ENCODE measurements at regions of chr1 and their contacts with region 1.

Region 1: GRCh38 chr1:171188388-171189266 is 3.5 kb downstream of the FMO2 start:
- DNase-seq: peak; percentile 48 to 76 (median 51)
- ATAC-seq: peak; percentile 60 to 87
- H3K4me3 ChIP-seq: peak overlapping the region; percentile 96
- H3K27ac ChIP-seq: peak overlapping the region; percentile 52
- H3K4me1 ChIP-seq: peaks cover 4% of the 10 kb centered on the region
- H3K27me3 ChIP-seq: no peaks in the 10 kb centered on the region

Region 2: DNA sequence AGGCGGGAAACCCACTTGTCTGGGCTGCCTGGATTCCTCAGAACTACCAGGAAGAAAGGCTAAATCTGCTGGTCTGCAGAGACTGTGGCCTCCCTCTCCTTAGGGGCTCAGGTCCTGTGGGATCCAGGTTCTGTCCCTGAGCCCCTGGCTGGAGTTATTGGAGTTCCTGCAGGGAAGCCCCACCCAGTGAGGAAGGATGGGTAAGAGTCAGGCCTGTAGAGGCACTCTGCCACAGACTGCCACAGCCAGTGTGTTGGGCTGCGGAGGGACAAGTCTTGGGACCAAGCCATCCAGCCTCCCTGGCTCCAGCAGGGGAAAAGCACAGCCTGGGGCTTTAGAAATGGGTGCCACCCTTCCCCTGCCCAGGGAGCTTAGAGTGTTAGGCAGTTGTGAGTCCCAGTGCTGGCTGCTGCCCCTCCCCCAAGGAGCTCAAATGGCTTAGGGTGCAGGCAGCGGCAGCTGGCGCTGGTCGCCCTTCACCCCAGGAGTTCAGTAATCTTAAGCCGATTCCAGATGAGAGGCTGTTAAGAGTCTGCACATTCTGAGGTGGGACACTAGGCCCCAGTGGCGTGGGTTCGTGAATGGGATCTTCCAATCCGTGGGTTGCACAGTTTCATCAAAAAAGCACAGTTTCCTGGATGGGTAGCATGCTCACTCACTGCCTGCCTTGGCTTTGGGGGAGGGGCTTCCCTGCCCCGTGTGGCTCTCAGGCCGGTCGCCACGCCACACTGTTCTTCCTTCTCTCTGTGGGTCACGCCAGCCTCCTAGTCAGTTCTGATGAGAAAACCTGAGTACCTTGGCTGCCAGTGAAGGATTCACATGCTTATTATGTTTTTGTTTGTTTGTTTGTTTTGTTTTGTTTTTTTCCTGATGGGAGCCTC is 155.6 kb before region 1 on chr1:
- intact Hi-C with region 1: no loop called
- DNase-seq: no peak
- ATAC-seq: no peak
- H3K4me3 ChIP-seq: no peak overlapping the region
- H3K27ac ChIP-seq: no peak overlapping the region
- H3K4me1 ChIP-seq: no peaks in the 10 kb centered on the region
- H3K27me3 ChIP-seq: no peaks in the 10 kb centered on the region

Region 3: DNA sequence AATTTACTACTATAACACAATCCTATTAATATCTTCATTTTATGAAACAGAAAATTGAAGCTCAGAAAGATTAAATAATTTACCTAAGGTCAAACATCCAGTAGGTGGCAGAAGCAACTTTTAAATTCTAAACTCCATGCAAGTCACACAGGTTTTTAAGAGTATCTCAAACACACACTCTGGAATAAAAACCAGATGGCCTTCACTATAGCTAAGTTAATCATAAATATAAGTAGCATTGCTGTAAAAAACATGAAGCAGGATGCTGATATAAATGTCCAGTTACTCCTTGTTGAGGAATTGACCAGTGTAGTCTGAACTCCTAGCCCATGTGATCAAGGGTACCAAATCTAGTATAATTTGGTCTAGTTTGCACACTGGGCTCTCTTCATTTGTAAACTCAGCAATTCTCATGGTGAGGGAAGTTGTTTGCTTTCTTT is 107.3 kb before region 1 on chr1:
- intact Hi-C with region 1: loop called in 3 of 4 experiments (anchors 5 to 10 kb)
- DNase-seq: no peak
- ATAC-seq: peak; percentile 42 to 66
- H3K4me3 ChIP-seq: no peak overlapping the region
- H3K27ac ChIP-seq: peak overlapping the region; percentile 61
- H3K4me1 ChIP-seq: peaks cover 4% of the 10 kb centered on the region
- H3K27me3 ChIP-seq: no peaks in the 10 kb centered on the region

Region 4: DNA sequence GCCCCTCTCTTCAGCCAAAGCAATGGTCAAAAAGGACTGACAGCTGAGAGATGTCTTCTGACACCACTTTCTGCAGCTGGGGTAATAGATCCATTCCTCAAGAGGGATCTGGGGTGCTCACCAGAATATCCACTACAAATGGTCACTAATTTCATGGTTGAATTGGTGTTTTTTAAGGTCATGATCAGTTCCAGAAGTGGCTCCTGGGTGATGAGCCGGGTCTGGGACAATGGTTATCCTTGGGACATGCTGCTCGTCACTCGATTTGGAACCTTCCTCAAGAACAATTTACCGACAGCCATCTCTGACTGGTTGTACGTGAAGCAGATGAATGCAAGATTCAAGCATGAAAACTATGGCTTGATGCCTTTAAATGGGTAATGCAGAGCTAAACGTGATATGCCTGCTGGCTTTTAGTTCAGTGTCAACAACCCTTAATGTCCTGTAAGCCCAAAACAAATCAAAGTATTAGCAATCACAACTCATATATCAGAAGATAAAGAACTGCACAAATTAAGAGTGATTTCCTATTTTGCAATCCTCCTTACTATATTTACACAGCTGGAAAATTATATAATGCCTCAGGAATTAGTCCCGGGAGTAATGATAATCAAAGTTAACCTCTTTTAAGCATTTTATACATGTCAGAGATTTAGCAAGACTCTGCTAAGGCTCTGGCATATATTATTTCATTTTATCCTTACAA is 77.9 kb before region 1 on chr1:
- intact Hi-C with region 1: loop called in 1 of 4 experiments (anchors 2 kb)
- DNase-seq: peak in 1 of 3 donors; percentile 17
- ATAC-seq: peak; percentile 17 to 29
- H3K4me3 ChIP-seq: no peak overlapping the region
- H3K27ac ChIP-seq: peak overlapping the region; percentile 38
- H3K4me1 ChIP-seq: peaks cover 4% of the 10 kb centered on the region
- H3K27me3 ChIP-seq: no peaks in the 10 kb centered on the region

Region 5: DNA sequence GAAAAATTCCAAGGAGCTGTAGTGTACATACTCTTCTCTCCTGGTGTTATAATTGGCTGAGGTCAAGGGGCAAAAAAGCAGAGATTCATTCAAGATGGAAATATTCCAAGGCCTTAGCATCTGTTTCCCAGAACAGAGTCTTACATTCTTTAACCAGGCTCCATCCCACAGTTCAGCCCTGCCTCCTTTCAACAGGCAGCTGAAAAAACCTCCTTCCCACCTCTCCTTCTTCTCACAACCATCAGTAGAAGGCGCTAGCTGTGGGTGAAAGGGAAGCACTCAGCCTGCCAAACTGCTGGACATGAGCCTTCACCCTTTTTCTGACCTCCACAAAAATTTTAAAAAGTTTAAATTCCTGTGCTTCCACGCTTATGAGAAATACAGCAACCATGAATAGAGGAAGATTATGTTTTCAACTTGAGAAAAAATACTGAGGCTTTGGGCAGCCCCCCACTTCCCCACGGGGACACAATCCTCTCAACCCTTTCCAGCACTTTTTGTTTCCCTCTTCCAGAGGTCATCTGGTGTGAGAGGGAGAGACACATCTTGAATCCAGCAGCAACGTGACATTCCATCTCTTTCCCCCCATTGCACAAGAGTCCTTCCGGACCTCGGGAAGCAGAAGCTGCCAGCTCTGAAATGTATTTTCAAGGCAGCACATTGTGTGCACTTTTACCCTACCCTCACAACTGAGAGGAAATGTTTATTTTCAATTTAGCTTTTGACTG is 46.8 kb before region 1 on chr1:
- intact Hi-C with region 1: loop called in 1 of 4 experiments (anchors 2 kb)
- DNase-seq: peak; percentile 68 to 80 (median 73)
- ATAC-seq: peak; percentile 88 to 89
- H3K4me3 ChIP-seq: no peak overlapping the region
- H3K27ac ChIP-seq: peak overlapping the region; percentile 88
- H3K4me1 ChIP-seq: peaks cover 7% of the 10 kb centered on the region
- H3K27me3 ChIP-seq: no peaks in the 10 kb centered on the region

Region 6: GRCh38 chr1:171550050-171550449 is 361.4 kb after region 1 on chr1:
- intact Hi-C with region 1: no loop called
- DNase-seq: no peak
- ATAC-seq: no peak
- H3K4me3 ChIP-seq: no peak overlapping the region
- H3K27ac ChIP-seq: no peak overlapping the region
- H3K4me1 ChIP-seq: no peaks in the 10 kb centered on the region
- H3K27me3 ChIP-seq: no peaks in the 10 kb centered on the region